Thyroid gland (tissue), 4 donors: ENCODE measurements at regions of chr1 and their contacts with region 1.

Region 1: GRCh38 chr1:205255941-205256780 is 28.4 kb downstream of the TMCC2 start:
- DNase-seq: peak; percentile 92
- H3K4me3 ChIP-seq: no peak overlapping the region
- H3K27ac ChIP-seq: no peak overlapping the region
- H3K4me1 ChIP-seq: peaks cover 0 to 4% of the 10 kb centered on the region in 2 donors
- H3K27me3 ChIP-seq: no peaks in the 10 kb centered on the region
- CTCF ChIP-seq: peak; percentile 85 to 99 (median 97)
- POLR2A ChIP-seq: no peak

Region 2: DNA sequence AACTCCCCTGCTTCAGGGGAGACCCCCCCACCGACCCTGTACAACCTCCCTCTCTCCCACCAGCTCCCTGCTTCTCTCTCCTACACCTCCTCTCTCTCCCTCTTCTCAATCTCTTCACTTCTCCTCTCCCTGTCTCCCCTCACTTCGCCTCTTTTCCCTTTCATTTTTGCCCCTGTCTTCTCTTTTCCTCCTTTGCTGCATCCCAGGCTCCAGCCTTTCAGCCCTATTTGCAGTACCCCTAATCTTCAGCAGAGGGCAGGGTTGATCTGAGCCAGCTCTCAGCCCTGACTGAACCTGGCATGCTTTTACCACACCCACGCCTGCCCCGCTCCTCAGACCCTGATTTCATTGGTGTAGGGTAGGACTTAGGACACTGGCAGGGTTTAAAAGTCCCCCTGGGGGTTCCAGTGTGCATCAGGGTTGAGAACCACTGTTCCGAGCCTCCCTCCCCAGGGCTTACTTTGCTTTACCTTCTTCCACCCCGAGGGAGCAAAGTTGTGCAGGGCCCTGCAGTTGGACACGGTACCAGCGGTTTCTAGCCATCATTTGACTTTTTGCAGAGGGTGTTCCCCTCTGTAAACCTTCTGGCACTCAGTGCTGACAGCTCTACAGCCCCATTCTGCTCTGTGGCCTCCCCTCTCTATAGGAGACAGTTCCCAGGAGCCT is 280.5 kb before region 1 on chr1:
- intact Hi-C with region 1: loop called (anchors 5 kb)
- DNase-seq: peak; percentile 45 to 54
- H3K4me3 ChIP-seq: no peak overlapping the region
- H3K27ac ChIP-seq: no peak overlapping the region
- H3K4me1 ChIP-seq: peaks cover 0 to 3% of the 10 kb centered on the region in 2 donors
- H3K27me3 ChIP-seq: no peaks in the 10 kb centered on the region
- CTCF ChIP-seq: peak; percentile 56 to 90 (median 78)
- POLR2A ChIP-seq: no peak

Region 3: GRCh38 chr1:204989266-204990058 is 266.7 kb before region 1 on chr1:
- intact Hi-C with region 1: loop called (anchors 5 kb)
- DNase-seq: peak; percentile 63 to 68
- H3K4me3 ChIP-seq: no peak overlapping the region
- H3K27ac ChIP-seq: no peak overlapping the region
- H3K4me1 ChIP-seq: no peaks in the 10 kb centered on the region
- H3K27me3 ChIP-seq: no peaks in the 10 kb centered on the region
- CTCF ChIP-seq: peak; percentile 85 to 97 (median 94)
- POLR2A ChIP-seq: no peak

Region 4: GRCh38 chr1:205001162-205001561 is 255.0 kb before region 1 on chr1:
- intact Hi-C with region 1: no loop called
- DNase-seq: no peak
- H3K4me3 ChIP-seq: no peak overlapping the region
- H3K27ac ChIP-seq: no peak overlapping the region
- H3K4me1 ChIP-seq: no peaks in the 10 kb centered on the region
- H3K27me3 ChIP-seq: no peaks in the 10 kb centered on the region
- CTCF ChIP-seq: no peak
- POLR2A ChIP-seq: no peak

Region 5: GRCh38 chr1:205141236-205142101 is 114.7 kb before region 1 on chr1:
- intact Hi-C with region 1: loop called (anchors 10 kb)
- DNase-seq: peak; percentile 92 to 95
- H3K4me3 ChIP-seq: no peak overlapping the region
- H3K27ac ChIP-seq: peak overlapping the region; percentile 7 to 61 (median 23)
- H3K4me1 ChIP-seq: peaks cover 16 to 25% of the 10 kb centered on the region in 2 donors
- H3K27me3 ChIP-seq: no peaks in the 10 kb centered on the region
- CTCF ChIP-seq: peak; percentile 60 to 89 (median 80)
- POLR2A ChIP-seq: no peak

Region 6: DNA sequence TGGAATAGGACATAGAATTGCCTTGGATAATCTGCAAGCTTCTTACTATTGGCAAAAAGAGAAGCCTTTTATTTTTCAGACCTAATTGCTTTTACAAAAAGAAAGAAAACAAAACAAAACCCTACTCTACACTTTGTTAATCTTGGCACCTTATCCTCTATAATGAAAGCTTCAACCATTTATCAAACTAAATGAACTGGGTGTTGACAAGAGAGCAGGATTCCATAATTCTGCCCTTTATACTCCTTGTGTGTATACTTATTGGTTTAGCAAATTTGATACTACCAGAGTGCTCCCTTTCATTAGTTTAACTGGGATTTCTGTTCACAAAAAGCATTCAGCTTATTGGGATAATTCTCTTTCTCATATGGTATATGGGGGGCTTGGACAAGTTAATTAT is 31.4 kb before region 1 on chr1:
- intact Hi-C with region 1: loop called (anchors 5 kb)
- DNase-seq: no peak
- H3K4me3 ChIP-seq: no peak overlapping the region
- H3K27ac ChIP-seq: no peak overlapping the region
- H3K4me1 ChIP-seq: peaks cover 20 to 27% of the 10 kb centered on the region in 2 donors
- H3K27me3 ChIP-seq: no peaks in the 10 kb centered on the region
- CTCF ChIP-seq: no peak
- POLR2A ChIP-seq: no peak